ENCODE measurements at regions of chr2 and their contacts with region 1.

Region 1: GRCh38 chr2:237512774-237513466 is 25.9 kb downstream of the MLPH start:
- DNase-seq: peak; percentile 87
- H3K4me3 Mint-ChIP-seq: no peak overlapping the region
- H3K27ac Mint-ChIP-seq: no peak overlapping the region
- H3K4me1 Mint-ChIP-seq: no peaks in the 10 kb centered on the region
- H3K27me3 Mint-ChIP-seq: peaks cover 6% of the 10 kb centered on the region

Region 2: GRCh38 chr2:237122214-237122666 is 390.7 kb before region 1 on chr2:
- CTCF ChIA-PET with region 1: interaction called, 11 read pairs
- POLR2A ChIA-PET with region 1: no interaction called
- intact Hi-C with region 1: no loop called
- DNase-seq: peak; percentile 81
- H3K4me3 Mint-ChIP-seq: no peak overlapping the region
- H3K27ac Mint-ChIP-seq: no peak overlapping the region
- H3K4me1 Mint-ChIP-seq: peaks cover 3% of the 10 kb centered on the region
- H3K27me3 Mint-ChIP-seq: no peaks in the 10 kb centered on the region

Region 3: DNA sequence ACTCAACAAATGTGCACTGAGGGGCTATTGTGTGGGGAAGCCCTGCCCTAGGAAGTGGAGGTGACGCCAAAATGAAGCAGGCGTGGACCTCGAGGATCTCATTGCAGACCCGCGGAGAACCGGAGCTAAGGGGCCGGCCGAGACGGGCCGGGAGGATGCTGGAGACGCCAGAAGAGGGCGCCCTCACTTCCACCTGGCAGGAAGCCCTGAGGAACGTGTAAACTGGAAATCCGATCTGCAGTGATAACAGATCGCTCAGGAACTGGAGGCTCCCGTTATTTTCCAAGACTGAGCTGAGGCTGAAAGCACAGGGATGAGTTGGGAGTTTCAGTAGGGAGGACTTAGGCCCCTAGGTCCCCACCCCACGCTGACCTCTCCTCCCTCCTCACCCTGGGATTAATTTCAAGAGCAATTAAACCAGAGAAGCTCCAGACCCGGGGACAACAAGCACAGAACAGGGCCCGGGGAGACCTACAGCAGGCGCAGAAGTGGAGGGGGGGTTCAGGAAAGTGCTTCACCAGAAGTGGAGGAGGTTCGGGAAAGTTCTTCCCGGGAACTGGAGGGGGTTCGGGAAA is 91.3 kb before region 1 on chr2:
- CTCF ChIA-PET with region 1: interaction called, 33 read pairs
- POLR2A ChIA-PET with region 1: no interaction called
- intact Hi-C with region 1: no loop called
- DNase-seq: peak; percentile 86
- H3K4me3 Mint-ChIP-seq: peak overlapping the region; percentile 38
- H3K27ac Mint-ChIP-seq: peak overlapping the region; percentile 50
- H3K4me1 Mint-ChIP-seq: peaks cover 20% of the 10 kb centered on the region
- H3K27me3 Mint-ChIP-seq: no peaks in the 10 kb centered on the region

Region 4: GRCh38 chr2:237524631-237525030 is 11.7 kb after region 1 on chr2:
- CTCF ChIA-PET with region 1: interaction called, 16 read pairs
- POLR2A ChIA-PET with region 1: no interaction called
- intact Hi-C with region 1: no loop called
- DNase-seq: no peak
- H3K4me3 Mint-ChIP-seq: no peak overlapping the region
- H3K27ac Mint-ChIP-seq: no peak overlapping the region
- H3K4me1 Mint-ChIP-seq: no peaks in the 10 kb centered on the region
- H3K27me3 Mint-ChIP-seq: no peaks in the 10 kb centered on the region

Region 5: GRCh38 chr2:237558906-237559641 is 46.2 kb after region 1 on chr2:
- CTCF ChIA-PET with region 1: interaction called, 18 read pairs
- POLR2A ChIA-PET with region 1: no interaction called
- intact Hi-C with region 1: no loop called
- DNase-seq: no peak
- H3K4me3 Mint-ChIP-seq: no peak overlapping the region
- H3K27ac Mint-ChIP-seq: no peak overlapping the region
- H3K4me1 Mint-ChIP-seq: peaks cover 13% of the 10 kb centered on the region
- H3K27me3 Mint-ChIP-seq: peaks cover 16% of the 10 kb centered on the region

Region 6: GRCh38 chr2:237572021-237572741 is 59.3 kb after region 1 on chr2:
- CTCF ChIA-PET with region 1: interaction called, 399 read pairs
- POLR2A ChIA-PET with region 1: interaction called, 3 read pairs
- intact Hi-C with region 1: loop called (anchors 1 kb)
- DNase-seq: peak; percentile 91
- H3K4me3 Mint-ChIP-seq: no peak overlapping the region
- H3K27ac Mint-ChIP-seq: no peak overlapping the region
- H3K4me1 Mint-ChIP-seq: no peaks in the 10 kb centered on the region
- H3K27me3 Mint-ChIP-seq: peaks cover 13% of the 10 kb centered on the region

Region 7: DNA sequence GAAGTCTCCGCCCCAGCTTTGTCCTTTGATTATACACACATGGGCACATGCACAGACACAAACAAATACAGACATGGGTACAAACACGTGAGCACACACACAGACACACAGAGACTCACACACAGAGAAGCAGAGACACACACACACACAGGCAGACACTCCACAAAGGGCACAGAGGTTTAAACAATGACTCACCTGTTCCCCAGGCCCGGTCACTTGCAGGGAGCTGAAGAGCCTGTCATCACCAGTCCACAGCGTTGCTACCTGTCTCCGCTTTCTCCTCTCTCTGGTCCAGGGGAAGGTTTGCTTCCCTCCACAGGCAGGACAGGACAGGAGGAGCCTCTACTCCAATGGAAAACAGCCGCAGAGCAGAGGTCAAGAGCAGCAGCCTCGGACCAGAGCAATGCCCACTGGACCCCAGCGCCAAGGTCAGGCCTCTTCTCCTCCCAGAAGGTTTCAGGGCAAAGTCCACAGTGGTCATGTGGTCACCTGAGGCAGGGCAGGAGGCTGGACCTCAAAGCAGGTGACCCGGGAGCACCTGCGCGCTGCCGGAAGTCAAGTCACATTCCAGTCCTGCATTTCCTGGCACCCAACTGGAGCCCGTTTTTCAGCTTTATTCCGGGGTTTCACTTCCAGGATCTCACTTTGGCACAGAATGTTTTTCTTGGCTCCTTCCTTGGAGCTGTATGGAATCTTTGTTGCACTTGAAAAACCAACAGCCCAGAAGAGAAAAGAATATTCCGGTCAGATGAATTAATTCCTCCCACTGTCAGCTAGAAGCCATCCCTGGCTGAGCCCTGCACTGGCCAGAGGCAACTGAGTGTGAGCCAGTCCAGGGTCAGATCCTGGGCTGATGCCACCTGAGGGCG is 77.6 kb after region 1 on chr2 and contains the start of gene RAB17:
- CTCF ChIA-PET with region 1: interaction called, 11 read pairs
- POLR2A ChIA-PET with region 1: no interaction called
- intact Hi-C with region 1: no loop called
- DNase-seq: no peak
- H3K4me3 Mint-ChIP-seq: no peak within 1 kb of the TSS
- H3K27ac Mint-ChIP-seq: no peak within 1 kb of the TSS
- H3K4me1 Mint-ChIP-seq: peaks cover 5% of the 10 kb centered on the region
- H3K27me3 Mint-ChIP-seq: no peaks in the 10 kb centered on the region
- total RNA-seq, gene RAB17: not detected

Region 8: GRCh38 chr2:237895544-237896506 is 382.9 kb after region 1 on chr2:
- CTCF ChIA-PET with region 1: no interaction called
- POLR2A ChIA-PET with region 1: no interaction called
- intact Hi-C with region 1: no loop called
- DNase-seq: no peak
- H3K4me3 Mint-ChIP-seq: no peak overlapping the region
- H3K27ac Mint-ChIP-seq: no peak overlapping the region
- H3K4me1 Mint-ChIP-seq: peaks cover 35% of the 10 kb centered on the region
- H3K27me3 Mint-ChIP-seq: no peaks in the 10 kb centered on the region